Spleen (tissue), 13 donors: ENCODE measurements at regions of chr11 and their contacts with region 1.

Region 1: DNA sequence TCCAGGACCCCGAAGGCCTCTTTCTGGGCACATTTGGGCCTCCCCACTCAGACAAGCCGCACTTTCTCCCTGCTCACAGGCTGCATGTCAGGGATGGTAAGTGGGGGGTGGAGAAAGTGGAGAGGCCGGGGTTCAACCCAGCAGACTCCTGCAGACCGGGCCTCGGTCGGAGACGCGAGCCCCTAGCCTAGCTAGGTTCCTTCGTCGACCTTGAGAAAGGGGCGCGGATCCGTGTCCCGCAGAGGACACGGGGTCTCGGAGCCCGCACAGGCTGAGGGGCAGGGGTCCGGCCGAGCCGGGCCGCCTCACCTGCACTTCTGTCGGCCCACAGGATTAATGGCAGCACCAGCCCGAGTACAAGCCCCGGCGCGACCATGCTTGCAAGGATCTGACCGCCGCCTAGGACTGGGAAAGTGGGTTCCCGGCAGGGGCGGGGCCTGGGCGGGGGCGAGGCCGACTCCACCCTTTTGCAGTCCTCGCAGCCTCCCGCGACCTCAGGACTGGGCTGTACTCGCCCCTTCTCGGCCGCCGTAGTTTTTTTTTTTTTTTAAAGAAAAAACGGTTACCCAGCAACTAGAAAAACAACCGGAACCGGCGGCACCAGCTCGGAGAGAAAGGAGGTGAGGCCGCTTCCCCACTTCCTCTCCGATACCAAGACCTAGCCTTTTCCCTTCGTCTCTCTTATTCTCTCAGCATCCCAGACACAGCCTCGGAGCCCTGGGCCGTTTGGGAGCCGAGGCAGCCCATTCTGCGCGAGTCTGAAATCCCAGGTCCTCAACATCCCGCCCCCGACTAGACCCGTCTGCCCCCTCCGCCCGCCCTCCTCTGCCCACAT is at the starts of genes SIAE and SPA17:
- DNase-seq: peak; percentile 96
- H3K4me3 ChIP-seq: peak within 1 kb of the TSS; percentile 55 to 79 (median 70)
- H3K27ac ChIP-seq: peak within 1 kb of the TSS; percentile 69 to 88 (median 82)
- H3K4me1 ChIP-seq: peaks cover 9 to 73% (median 19%) of the 10 kb centered on the region in 6 donors
- H3K27me3 ChIP-seq: no peaks in the 10 kb centered on the region
- CTCF ChIP-seq: no peak
- POLR2A ChIP-seq: peak in 1 of 3 donors; percentile 10
- total RNA-seq, gene SIAE: 8.9 to 15.3 (median 14.0) TPM
- total RNA-seq, gene SPA17: 0.34 to 2.6 (median 1.6) TPM

Region 2: DNA sequence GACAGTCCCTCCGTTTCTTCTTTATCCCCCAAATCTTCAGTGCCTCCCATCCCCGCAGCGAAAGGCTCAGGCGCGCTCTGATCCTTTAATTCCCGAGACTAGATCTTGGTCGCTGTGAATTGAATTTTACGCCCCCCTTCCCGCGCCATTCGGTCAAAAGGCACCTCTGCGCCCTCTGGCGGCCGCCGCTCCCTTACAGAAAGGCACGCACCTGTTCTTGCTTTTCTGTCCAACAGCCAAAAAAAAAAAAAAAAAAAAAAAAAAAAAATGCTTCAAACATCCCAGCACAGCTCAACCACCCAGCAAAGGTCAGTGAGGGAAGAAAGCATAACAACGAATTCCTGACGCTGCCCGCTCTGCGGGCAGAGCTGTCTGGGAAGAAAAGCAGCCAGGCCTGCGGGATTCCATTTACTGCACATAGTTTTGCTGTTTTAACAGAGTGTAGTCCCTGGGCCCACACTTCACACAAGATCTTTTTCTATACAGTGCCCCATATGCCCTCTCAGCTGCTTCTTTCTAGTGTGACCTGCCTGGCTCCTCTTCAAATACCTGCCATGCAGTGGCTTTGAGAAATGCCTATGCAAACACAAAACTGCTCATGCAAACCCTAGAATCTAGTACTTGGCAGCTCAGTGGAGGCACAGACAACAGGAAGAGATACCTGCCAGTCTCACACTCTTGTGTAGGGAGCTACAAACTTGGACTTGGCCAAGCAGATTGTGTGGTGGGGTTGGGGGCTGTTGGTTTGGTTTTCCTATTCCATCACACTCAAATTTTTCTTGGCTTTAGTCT is 89.8 kb after region 1 on chr11:
- intact Hi-C with region 1: loop called (anchors 5 kb)
- DNase-seq: peak; percentile 94
- H3K4me3 ChIP-seq: peak overlapping the region; percentile 48 to 81 (median 62)
- H3K27ac ChIP-seq: peak overlapping the region in 5 of 8 donors; percentile 69 to 83 (median 81)
- H3K4me1 ChIP-seq: peaks cover 29 to 57% (median 52%) of the 10 kb centered on the region in 6 donors
- H3K27me3 ChIP-seq: peaks cover 0 to 48% (median 34%) of the 10 kb centered on the region in 7 donors
- CTCF ChIP-seq: peak; percentile 55 to 90 (median 81)
- POLR2A ChIP-seq: no peak

Region 3: GRCh38 chr11:124837491-124837856 is 163.9 kb after region 1 on chr11:
- intact Hi-C with region 1: loop called (anchors 2 kb)
- DNase-seq: no peak
- H3K4me3 ChIP-seq: no peak overlapping the region
- H3K27ac ChIP-seq: no peak overlapping the region
- H3K4me1 ChIP-seq: peaks cover 12 to 43% (median 25%) of the 10 kb centered on the region in 6 donors
- H3K27me3 ChIP-seq: peaks cover 11 to 74% (median 48%) of the 10 kb centered on the region in 7 donors
- CTCF ChIP-seq: peak in 1 of 11 experiments; percentile 36
- POLR2A ChIP-seq: no peak